ENCODE measurements at regions of chr16 and their contacts with region 1.

Region 1: GRCh38 chr16:138049-138417 is 440 bp downstream of the NPRL3 start:
- DNase-seq: peak; percentile 27
- H3K4me3 Mint-ChIP-seq: peak overlapping the region; percentile 86
- H3K27ac Mint-ChIP-seq: no peak overlapping the region
- H3K4me1 Mint-ChIP-seq: peaks cover 15% of the 10 kb centered on the region
- H3K27me3 Mint-ChIP-seq: peaks cover 2% of the 10 kb centered on the region

Region 2: DNA sequence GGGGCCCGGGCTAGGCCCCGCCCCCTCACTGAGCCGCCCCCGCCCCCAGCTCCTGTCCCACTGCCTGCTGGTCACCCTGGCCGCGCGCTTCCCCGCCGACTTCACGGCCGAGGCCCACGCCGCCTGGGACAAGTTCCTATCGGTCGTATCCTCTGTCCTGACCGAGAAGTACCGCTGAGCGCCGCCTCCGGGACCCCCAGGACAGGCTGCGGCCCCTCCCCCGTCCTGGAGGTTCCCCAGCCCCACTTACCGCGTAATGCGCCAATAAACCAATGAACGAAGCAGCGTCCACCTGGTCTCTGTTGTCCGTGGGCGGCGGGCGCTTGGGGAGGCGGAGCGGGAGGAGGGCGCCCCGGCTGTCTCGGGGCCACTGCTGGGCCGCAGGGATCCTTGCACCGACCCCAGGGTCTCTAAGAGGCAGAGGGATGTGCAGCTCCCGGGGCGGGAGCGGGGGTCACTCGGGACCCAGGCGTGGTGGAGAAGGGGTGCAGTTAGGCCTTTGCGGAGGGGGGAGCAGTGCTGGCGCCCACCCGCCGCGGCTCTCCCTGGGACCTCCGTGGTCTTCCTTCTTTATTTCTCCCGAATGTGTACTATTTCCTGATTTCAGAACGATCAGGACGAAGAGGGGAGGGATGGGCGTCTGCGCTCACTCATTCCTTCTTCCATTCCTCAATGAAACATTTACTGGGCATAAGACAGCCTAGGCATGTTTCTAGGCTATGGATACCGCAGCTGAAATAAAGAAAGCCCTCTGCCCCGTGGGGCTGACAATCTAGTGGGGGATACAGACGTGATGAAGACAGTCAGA is 16.4 kb after region 1 on chr16:
- intact Hi-C with region 1: loop called (anchors 2 kb)
- DNase-seq: no peak
- H3K4me3 Mint-ChIP-seq: peak overlapping the region; percentile 55
- H3K27ac Mint-ChIP-seq: peak overlapping the region; percentile 10
- H3K4me1 Mint-ChIP-seq: peaks cover 6% of the 10 kb centered on the region
- H3K27me3 Mint-ChIP-seq: peaks cover 44% of the 10 kb centered on the region

Region 3: DNA sequence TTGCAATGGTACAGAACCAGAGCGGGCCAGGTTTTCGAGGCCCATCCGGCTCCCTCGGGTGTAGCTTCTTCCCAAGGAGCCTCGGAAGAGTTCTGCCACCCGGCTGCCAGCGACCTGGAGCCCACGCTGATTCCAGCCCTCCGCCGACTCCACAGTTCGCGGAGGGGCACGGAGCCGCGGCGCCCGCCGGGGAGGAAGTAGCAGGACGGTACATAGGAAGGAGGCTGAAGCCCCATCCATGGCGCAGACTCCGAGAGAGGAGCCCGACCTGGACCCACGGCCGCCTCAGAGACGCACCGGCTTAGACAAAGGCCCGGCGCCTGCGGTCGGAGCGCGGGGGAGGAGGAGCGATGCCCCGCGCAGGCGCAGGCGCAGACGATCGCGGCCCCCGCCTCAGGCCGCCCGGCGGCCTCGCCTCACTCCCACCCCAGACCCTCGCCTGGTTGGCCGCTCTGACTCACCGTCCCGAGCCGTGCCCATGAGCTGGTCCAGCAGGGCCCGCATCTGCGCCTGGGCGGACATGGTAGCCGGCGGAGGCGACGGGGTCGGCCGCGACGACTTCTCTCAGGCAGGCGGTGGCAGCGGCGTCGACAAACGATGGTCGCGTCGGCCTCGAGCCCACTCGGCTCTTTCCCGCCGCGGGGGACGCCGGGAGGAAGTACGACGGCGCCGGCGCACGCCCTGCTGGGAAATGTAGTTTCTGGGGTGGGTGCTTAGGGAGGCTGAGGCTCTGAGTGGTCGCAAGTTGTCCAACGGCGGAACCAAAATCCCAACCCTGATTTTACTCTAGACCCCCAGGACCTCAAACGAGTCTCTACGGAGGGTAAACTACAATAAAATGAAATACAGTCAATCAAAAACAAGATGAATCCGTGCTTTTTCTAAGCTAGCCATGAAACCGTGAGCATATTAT is 91.0 kb after region 1 on chr16 and contains the start of gene LUC7L:
- intact Hi-C with region 1: loop called (anchors 1 kb)
- DNase-seq: peak; percentile 80
- H3K4me3 Mint-ChIP-seq: peak within 1 kb of the TSS; percentile 94
- H3K27ac Mint-ChIP-seq: peak within 1 kb of the TSS; percentile 91
- H3K4me1 Mint-ChIP-seq: peaks cover 31% of the 10 kb centered on the region
- H3K27me3 Mint-ChIP-seq: no peaks in the 10 kb centered on the region
- total RNA-seq, gene LUC7L: 77.7 and 83.0 TPM in 2 replicates

Region 4: GRCh38 chr16:278863-279366 is 140.9 kb after region 1 on chr16:
- intact Hi-C with region 1: no loop called
- DNase-seq: peak; percentile 7
- H3K4me3 Mint-ChIP-seq: no peak overlapping the region
- H3K27ac Mint-ChIP-seq: no peak overlapping the region
- H3K4me1 Mint-ChIP-seq: no peaks in the 10 kb centered on the region
- H3K27me3 Mint-ChIP-seq: peaks cover 34% of the 10 kb centered on the region